ENCODE measurements at regions of chr1 and their contacts with region 1.

Region 1: GRCh38 chr1:89605692-89606091 is 27.2 kb upstream of the LRRC8C start:
- DNase-seq: no peak
- ATAC-seq: no peak
- H3K4me3 Mint-ChIP-seq: peak overlapping the region; percentile 20
- H3K27ac Mint-ChIP-seq: peak overlapping the region; percentile 99
- H3K4me1 Mint-ChIP-seq: peaks cover 97% of the 10 kb centered on the region
- H3K27me3 Mint-ChIP-seq: no peaks in the 10 kb centered on the region
- CTCF ChIP-seq: no peak

Region 2: GRCh38 chr1:89524369-89525168 is 81.1 kb before region 1 on chr1 and contains the start of gene LRRC8B:
- CTCF ChIA-PET with region 1: interaction called, 8 read pairs
- POLR2A ChIA-PET with region 1: interaction called, 13 read pairs
- intact Hi-C with region 1: loop called (anchors 5 kb)
- DNase-seq: peak; percentile 91
- ATAC-seq: peak; percentile 75
- H3K4me3 Mint-ChIP-seq: no peak within 1 kb of the TSS
- H3K27ac Mint-ChIP-seq: no peak within 1 kb of the TSS
- H3K4me1 Mint-ChIP-seq: peaks cover 31% of the 10 kb centered on the region
- H3K27me3 Mint-ChIP-seq: no peaks in the 10 kb centered on the region
- CTCF ChIP-seq: no peak
- total RNA-seq, gene LRRC8B: 24.9 to 31.7 TPM

Region 3: GRCh38 chr1:89622895-89623294 is 17.2 kb after region 1 on chr1:
- CTCF ChIA-PET with region 1: interaction called, 22 read pairs
- POLR2A ChIA-PET with region 1: interaction called, 27 read pairs
- intact Hi-C with region 1: no loop called
- DNase-seq: no peak
- ATAC-seq: peak; percentile 11
- H3K4me3 Mint-ChIP-seq: no peak overlapping the region
- H3K27ac Mint-ChIP-seq: peak overlapping the region; percentile 59
- H3K4me1 Mint-ChIP-seq: peaks cover 57% of the 10 kb centered on the region
- H3K27me3 Mint-ChIP-seq: no peaks in the 10 kb centered on the region
- CTCF ChIP-seq: no peak

Region 4: GRCh38 chr1:89757532-89757931 is 151.8 kb after region 1 on chr1:
- CTCF ChIA-PET with region 1: interaction called, 41 read pairs
- POLR2A ChIA-PET with region 1: interaction called, 29 read pairs
- intact Hi-C with region 1: no loop called
- DNase-seq: peak; percentile 86
- ATAC-seq: peak; percentile 86
- H3K4me3 Mint-ChIP-seq: peak overlapping the region; percentile 73
- H3K27ac Mint-ChIP-seq: peak overlapping the region; percentile 93
- H3K4me1 Mint-ChIP-seq: peaks cover 89% of the 10 kb centered on the region
- H3K27me3 Mint-ChIP-seq: no peaks in the 10 kb centered on the region
- CTCF ChIP-seq: no peak